Sigmoid colon (tissue), 7 donors: ENCODE measurements at regions of chr19 and their contacts with region 1.

Region 1: GRCh38 chr19:47436712-47437401 is 17.5 kb upstream of the MEIS3 start:
- DNase-seq: peak; percentile 88
- H3K4me3 ChIP-seq: no peak overlapping the region
- H3K27ac ChIP-seq: peak overlapping the region in 1 of 4 donors; percentile 2
- H3K4me1 ChIP-seq: no peaks in the 10 kb centered on the region
- H3K27me3 ChIP-seq: peaks cover 0 to 9% (median 0%) of the 10 kb centered on the region in 3 donors
- CTCF ChIP-seq: peak; percentile 85 to 90 (median 86)
- EP300 ChIP-seq: no peak
- POLR2A ChIP-seq: no peak

Region 2: GRCh38 chr19:47483800-47484690 is 47.2 kb after region 1 on chr19 and contains the start of gene KPTN:
- intact Hi-C with region 1: loop called (anchors 2 kb)
- DNase-seq: peak; percentile 95
- H3K4me3 ChIP-seq: peak within 1 kb of the TSS; percentile 60 to 75 (median 69)
- H3K27ac ChIP-seq: peak within 1 kb of the TSS; percentile 91 to 92 (median 92)
- H3K4me1 ChIP-seq: peaks cover 3 to 28% (median 19%) of the 10 kb centered on the region in 4 donors
- H3K27me3 ChIP-seq: no peaks in the 10 kb centered on the region
- CTCF ChIP-seq: peak; percentile 88 to 95 (median 92)
- EP300 ChIP-seq: peak in 1 of 4 donors; percentile 27
- POLR2A ChIP-seq: no peak
- total RNA-seq, gene KPTN: 4.4 to 10.0 (median 4.7) TPM

Region 3: GRCh38 chr19:47514869-47515588 is 78.2 kb after region 1 on chr19 and contains the start of gene NAPA:
- intact Hi-C with region 1: loop called (anchors 2 kb)
- DNase-seq: peak; percentile 100
- H3K4me3 ChIP-seq: peak within 1 kb of the TSS; percentile 97 to 99 (median 98)
- H3K27ac ChIP-seq: peak within 1 kb of the TSS; percentile 98 to 100 (median 99)
- H3K4me1 ChIP-seq: peaks cover 0 to 52% (median 43%) of the 10 kb centered on the region in 4 donors
- H3K27me3 ChIP-seq: no peaks in the 10 kb centered on the region
- CTCF ChIP-seq: no peak
- EP300 ChIP-seq: peak in 3 of 4 donors; percentile 18 to 95 (median 33)
- POLR2A ChIP-seq: peak; percentile 98 to 99
- total RNA-seq, gene NAPA: 84.9 to 167 (median 91.8) TPM

Region 4: GRCh38 chr19:47608074-47608918 is 171.4 kb after region 1 on chr19:
- intact Hi-C with region 1: loop called (anchors 5 kb)
- DNase-seq: peak; percentile 97
- H3K4me3 ChIP-seq: peak overlapping the region; percentile 70 to 98 (median 86)
- H3K27ac ChIP-seq: peak overlapping the region; percentile 95 to 98 (median 98)
- H3K4me1 ChIP-seq: peaks cover 0 to 44% (median 39%) of the 10 kb centered on the region in 4 donors
- H3K27me3 ChIP-seq: no peaks in the 10 kb centered on the region
- CTCF ChIP-seq: peak in 3 of 4 experiments; percentile 28 to 57 (median 44)
- EP300 ChIP-seq: no peak
- POLR2A ChIP-seq: peak; percentile 76 to 77

Region 5: GRCh38 chr19:47697863-47698609 is 261.2 kb after region 1 on chr19:
- intact Hi-C with region 1: loop called (anchors 2 kb)
- DNase-seq: peak; percentile 94
- H3K4me3 ChIP-seq: no peak overlapping the region
- H3K27ac ChIP-seq: peak overlapping the region; percentile 63 to 83 (median 82)
- H3K4me1 ChIP-seq: peaks cover 0 to 6% (median 5%) of the 10 kb centered on the region in 4 donors
- H3K27me3 ChIP-seq: no peaks in the 10 kb centered on the region
- CTCF ChIP-seq: peak; percentile 96 to 99 (median 98)
- EP300 ChIP-seq: no peak
- POLR2A ChIP-seq: no peak

Region 6: DNA sequence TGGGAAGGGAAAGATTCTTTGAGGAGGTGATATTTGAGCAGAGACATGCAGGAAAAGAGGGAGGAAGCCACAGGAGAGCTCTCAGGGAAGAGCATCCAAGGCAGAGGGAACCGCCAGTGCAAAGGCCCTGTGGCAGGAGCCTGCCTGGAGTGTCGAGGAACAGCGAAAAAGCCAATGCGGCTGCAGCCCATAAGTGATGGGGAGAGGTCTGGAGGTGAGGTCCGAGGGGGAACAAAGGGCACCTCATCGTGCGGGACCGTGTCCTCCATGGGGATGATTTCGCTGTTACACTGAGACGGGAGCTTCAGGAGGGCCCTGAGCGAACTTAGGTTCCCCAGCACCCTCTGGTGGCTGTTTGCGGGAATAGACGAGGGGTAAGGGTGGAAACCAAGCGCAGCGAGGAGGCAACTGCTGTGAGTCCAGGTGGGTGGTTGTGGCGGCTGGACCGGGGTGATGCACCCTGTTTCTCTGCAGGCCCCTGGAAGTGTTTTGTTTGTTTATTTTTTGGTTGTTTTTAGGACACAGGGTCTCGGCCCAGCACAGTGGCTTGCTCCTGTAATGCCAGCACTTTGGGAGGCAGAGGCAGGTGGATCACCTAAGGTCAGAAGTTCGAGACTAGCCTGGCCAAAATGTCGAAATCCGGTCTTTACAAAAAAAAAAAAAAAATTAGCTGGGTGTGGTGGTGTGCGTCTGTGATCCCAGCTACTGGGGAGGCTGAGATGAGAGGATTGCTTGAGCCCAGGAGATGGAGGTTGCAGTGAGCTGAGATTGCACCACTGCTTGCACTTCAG is 270.5 kb after region 1 on chr19:
- intact Hi-C with region 1: loop called (anchors 1 kb)
- DNase-seq: peak; percentile 88
- H3K4me3 ChIP-seq: no peak overlapping the region
- H3K27ac ChIP-seq: no peak overlapping the region
- H3K4me1 ChIP-seq: peaks cover 0 to 11% (median 10%) of the 10 kb centered on the region in 4 donors
- H3K27me3 ChIP-seq: no peaks in the 10 kb centered on the region
- CTCF ChIP-seq: peak; percentile 78 to 93 (median 80)
- EP300 ChIP-seq: no peak
- POLR2A ChIP-seq: no peak

Region 7: DNA sequence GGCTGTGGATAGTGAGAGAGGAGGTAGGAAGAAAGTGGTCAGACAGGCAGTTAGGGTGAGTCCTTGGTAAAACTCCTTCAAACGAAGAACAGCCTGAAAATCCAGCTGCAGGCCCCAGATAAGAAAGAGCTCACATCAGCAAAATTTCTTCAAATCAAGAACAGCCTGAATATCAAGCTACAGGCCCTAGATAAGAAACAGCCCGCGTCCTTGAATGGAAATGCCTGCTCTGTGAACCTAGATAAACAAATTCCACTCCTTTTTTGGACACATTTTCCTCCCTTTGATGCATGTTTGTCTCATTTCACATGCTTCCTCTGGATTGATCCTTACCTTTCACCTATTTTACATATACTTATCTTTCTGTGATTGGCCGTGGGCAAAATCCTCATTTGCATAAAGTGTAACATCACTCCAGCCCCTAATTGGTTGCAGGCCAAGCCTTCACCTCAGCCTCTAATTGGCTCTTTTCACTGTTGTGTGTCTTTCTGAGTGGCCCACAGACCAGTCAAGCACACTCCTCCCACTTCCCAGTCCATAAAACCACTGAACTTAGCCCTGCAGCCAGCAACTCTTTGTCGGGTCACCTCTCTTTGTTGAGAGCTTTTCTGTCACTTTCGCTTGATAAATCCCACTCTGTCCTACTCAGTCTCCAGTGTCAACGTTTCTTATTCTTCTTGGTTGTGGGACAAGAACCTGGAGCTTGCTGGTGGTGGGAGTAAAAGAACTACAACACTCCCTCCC is 455.2 kb after region 1 on chr19:
- intact Hi-C with region 1: no loop called
- DNase-seq: peak; percentile 5
- H3K4me3 ChIP-seq: no peak overlapping the region
- H3K27ac ChIP-seq: no peak overlapping the region
- H3K4me1 ChIP-seq: no peaks in the 10 kb centered on the region
- H3K27me3 ChIP-seq: no peaks in the 10 kb centered on the region
- CTCF ChIP-seq: no peak
- EP300 ChIP-seq: no peak
- POLR2A ChIP-seq: no peak